K562 (cell line): ENCODE measurements at regions of chr9 and their contacts with region 1.

Region 1: DNA sequence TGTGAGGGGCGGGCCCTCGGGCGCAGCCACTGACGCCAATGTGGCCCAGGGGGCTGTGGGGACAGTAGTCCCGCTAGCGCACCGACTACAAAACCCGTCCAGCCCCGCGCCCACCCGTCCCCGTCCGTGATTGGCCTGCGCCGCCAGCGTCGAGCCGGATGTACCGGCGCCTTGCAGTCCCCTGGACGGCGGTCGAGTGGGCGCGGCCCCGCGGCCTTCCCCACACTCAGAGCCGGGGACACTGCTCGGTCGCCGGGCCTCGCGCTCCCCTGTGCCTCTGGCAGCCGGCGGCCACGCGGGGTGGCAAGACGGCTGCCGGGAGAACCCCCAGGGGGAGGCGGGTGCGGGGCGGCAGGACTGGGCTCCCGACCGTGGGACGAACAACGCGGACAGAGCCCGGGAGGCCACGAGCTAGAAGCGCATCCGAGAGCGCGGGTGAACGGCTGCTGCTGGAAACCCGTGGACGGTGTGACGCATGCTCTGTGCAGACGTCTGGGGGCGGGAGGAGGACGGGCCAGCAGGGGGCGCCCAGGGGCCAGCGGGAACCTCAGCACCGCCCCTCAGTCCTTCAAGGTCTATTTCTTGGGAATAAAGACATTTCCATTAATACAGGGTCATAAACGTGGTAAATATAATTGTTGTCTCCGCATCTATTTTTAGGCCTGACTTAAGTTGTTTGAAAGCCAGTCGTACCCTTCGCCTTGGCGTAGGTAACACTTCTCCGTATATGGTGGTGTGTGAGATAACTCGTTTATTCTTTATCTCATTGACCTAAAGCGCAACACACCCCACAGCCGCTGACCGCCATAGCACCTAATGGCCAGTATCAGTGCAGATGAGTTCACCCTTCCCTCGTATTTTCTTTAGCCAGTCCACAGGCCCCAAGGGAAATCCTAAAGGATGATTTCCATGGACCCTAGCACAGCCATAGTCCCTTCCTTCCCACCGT is 629 bp upstream of the BICD2 start:
- DNase-seq: peak; percentile 96 to 98 (median 97)
- ATAC-seq: peak; percentile 96
- H3K4me3 ChIP-seq: peak overlapping the region; percentile 98
- H3K27ac ChIP-seq: peak overlapping the region; percentile 100
- H3K4me1 ChIP-seq: peaks cover 34 to 35% of the 10 kb centered on the region in 2 experiments
- H3K27me3 ChIP-seq: no peaks in the 10 kb centered on the region
- CTCF ChIP-seq: peak; percentile 89 to 94 (median 93)
- EP300 ChIP-seq: no peak
- POLR2A ChIP-seq: peak; percentile 94
- RAD21 ChIP-seq: peak; percentile 54 to 64; a peak in 3 of 4 replicates

Region 2: DNA sequence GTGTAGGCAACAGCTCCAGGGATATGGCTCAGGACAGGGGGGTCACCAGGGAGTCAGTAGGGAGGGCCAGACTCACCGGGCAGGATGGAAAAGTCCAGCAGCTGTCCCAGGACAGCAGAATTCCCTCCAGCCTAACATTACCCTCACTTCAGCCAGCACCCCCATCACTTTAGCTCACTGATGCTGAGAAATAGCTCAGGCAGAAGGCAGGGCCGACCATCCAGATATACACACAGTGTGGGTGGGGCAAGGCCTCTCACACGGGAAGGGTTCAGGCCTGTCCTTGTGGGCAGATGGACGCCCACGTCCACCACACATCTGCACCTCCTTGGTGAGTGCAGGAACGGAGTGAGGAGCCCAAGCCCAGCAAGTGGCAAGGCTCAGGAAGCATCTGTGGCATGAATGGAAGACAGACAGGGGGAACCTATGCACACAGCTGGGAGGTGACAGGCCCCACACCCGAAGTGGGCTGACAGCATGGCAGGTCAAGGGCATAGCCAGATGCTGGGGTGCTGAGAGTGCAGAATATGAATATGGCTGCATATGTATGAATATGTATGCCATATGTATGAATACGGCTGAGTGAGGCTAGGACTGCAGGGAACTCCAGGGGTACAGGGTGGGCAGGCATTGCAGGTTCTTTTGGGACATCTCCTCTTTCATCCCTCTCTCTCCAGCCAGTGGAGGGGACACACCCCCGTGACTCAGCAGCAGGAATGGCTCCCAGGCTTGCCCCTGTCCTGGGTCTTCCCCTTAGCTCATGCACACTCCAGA is 17.6 kb before region 1 on chr9:
- CTCF ChIA-PET with region 1: no interaction called
- POLR2A ChIA-PET with region 1: interaction called, 10 read pairs
- in situ Hi-C with region 1: no loop called
- intact Hi-C with region 1: no loop called
- DNase-seq: peak in 3 of 4 experiments; percentile 30 to 32 (median 31)
- ATAC-seq: peak; percentile 61
- H3K4me3 ChIP-seq: no peak overlapping the region
- H3K27ac ChIP-seq: peak overlapping the region; percentile 16; the same call in 1 of the 3 replicates
- H3K4me1 ChIP-seq: peaks cover 40 to 43% of the 10 kb centered on the region in 2 experiments
- H3K27me3 ChIP-seq: no peaks in the 10 kb centered on the region
- CTCF ChIP-seq: no peak
- EP300 ChIP-seq: no peak
- POLR2A ChIP-seq: no peak
- RAD21 ChIP-seq: no peak

Region 3: GRCh38 chr9:92781923-92782322 is 16.7 kb after region 1 on chr9:
- CTCF ChIA-PET with region 1: no interaction called
- POLR2A ChIA-PET with region 1: no interaction called
- in situ Hi-C with region 1: no loop called
- intact Hi-C with region 1: no loop called
- DNase-seq: no peak
- ATAC-seq: no peak
- H3K4me3 ChIP-seq: no peak overlapping the region
- H3K27ac ChIP-seq: no peak overlapping the region
- H3K4me1 ChIP-seq: no peaks in the 10 kb centered on the region
- H3K27me3 ChIP-seq: peaks cover 0 to 1% of the 10 kb centered on the region in 2 experiments; a peak in 1 of 5 replicates
- CTCF ChIP-seq: no peak
- EP300 ChIP-seq: no peak
- POLR2A ChIP-seq: no peak
- RAD21 ChIP-seq: no peak